Head of caudate nucleus (tissue), 42 donors: ENCODE measurements at regions of chr17 and their contacts with region 1.

Region 1: GRCh38 chr17:64975329-64976087 is 56.2 kb upstream of the LRRC37A3 start:
- DNase-seq: peak; percentile 84 to 98 (median 94)

Region 2: DNA sequence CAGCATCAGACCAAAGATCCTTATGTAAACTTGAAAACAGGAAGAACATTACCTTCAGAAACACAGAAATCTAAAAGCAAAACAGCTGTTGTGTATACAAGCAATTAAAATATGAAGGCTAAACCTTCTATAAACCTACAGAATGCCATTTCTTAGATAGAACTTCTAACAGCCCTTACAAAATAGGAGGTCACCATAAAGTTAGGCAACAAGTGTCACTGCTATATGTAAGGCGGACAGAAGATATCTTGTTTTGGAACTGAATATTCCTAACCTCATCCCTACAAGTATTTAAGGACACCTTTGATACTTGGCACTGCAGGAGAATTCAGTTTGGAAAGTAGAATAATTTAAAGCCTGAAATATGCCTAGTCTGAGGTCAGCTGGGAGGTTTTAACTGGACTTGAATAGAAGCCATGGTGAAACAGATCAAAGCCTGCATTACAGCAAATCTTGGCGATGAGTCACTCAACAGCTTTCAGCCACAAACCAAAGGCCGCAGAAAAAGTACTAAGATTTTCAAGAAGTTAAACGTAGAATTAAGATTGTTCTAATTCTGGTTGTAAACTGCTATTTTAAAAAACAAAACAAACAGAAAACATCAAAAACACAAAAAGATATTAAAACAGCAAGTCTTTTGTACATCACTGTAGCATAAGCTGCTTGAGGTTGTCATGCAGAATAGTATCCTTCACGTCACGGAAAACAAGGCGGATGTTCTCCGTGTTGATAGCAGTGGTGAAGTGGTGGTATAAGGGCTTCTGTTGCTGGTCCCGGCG is 38.3 kb after region 1 on chr17:
- intact Hi-C with region 1: no loop called
- DNase-seq: peak in 1 of 42 donors; percentile 31

Region 3: GRCh38 chr17:65055348-65056261 is 80.1 kb after region 1 on chr17:
- intact Hi-C with region 1: loop called (anchors 1 kb)
- DNase-seq: peak; percentile 51 to 90 (median 78)